Activated CD8-positive, alpha-beta T cell treated with anti-CD3 and anti-CD28 coated beads, Interleukin-2, amount 10 ng/mL, durations not matched to agents 7 days and 5 days (primary cell): ENCODE measurements at regions of chr1 and their contacts with region 1.

Region 1: DNA sequence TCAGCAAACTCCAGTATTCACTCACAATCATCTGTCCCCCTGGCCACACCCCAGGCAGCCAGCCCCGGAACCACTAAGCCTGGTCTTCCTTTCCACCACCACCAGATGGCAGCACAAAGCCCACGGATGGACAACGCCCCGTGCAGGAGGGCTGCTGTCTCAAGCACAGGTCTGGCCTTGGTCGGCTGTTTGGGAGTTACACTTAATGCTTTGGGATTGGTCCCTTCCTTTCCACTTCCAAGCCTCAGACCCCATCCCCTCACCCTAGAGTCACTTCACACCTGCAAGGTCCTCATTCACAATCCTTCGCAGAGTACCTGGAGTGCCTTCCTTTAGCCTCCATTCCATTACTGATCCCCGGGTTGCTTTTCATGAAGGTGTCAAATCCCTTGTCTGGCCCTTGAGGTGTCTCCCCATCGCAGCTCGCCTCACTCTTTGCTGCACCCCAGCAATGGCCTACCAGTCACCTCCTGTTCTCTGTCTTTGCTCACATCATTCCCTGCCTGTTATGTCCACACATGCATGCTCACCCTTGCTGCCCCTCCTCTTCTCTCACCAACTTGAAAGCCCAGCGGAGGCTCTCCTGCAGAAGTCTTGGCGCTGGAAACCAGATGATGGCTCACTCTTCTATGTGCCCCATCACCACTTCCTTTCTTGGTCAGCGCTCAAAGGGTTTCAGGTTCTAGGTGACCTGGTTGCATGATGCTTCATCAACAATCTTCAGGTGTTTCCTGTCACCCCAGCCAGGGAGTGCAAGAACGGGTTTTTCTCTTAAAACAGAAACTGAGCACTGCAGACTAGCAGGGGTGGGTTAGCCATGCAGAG is 24.9 kb upstream of the KCNA2 start:
- DNase-seq: peak; percentile 94
- ATAC-seq: peak; percentile 84
- H3K4me3 Mint-ChIP-seq: no peak overlapping the region
- H3K27ac Mint-ChIP-seq: no peak overlapping the region
- H3K4me1 Mint-ChIP-seq: peaks cover 32% of the 10 kb centered on the region
- H3K27me3 Mint-ChIP-seq: no peaks in the 10 kb centered on the region

Region 2: DNA sequence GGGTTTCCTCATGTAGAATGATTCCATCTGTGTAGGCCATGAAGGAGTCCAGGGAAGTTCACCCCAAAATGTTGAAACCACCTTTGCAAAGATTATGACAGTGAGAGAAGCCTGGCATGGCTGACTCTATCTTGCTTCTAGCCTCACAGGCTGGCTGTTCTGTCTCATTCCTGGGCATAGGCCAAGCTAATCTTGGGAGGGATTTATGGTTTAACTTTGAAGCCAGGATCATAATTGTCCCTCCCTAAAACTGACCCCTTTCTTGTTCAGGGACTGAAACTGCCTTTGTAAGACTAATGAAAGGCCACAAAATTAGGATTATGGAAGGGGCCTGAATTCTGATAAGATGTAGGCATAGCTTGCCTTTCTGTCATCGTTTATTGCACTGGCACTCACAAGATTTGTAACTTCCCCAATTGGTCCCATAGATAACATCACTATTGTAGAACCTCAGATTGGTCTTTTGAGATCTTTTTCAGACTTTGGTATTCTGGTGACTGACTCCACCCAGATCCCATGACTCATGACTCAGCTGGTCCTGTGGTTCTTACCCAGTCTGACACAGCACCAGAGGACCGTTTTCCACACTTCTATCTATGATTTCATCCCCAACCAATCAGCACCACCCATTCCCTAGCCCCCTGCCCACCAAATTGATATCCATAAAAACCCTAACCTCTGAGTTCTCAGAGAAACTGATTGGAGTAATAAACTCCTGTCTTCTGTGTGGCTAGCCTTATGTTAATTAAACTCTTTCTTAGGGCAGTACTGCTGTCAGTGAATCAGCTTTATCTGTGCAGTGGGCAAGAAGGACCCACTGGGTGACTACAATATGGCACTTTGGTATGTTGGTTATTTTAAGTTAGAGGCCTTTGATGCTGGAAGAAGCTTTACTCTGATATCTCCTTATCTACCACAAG is 209.9 kb before region 1 on chr1:
- CTCF ChIA-PET with region 1: no interaction called
- POLR2A ChIA-PET with region 1: no interaction called
- DNase-seq: no peak
- ATAC-seq: peak; percentile 47
- H3K4me3 Mint-ChIP-seq: no peak overlapping the region
- H3K27ac Mint-ChIP-seq: no peak overlapping the region
- H3K4me1 Mint-ChIP-seq: peaks cover 11% of the 10 kb centered on the region
- H3K27me3 Mint-ChIP-seq: peaks cover 9% of the 10 kb centered on the region

Region 3: GRCh38 chr1:110668549-110668948 is 37.5 kb after region 1 on chr1:
- CTCF ChIA-PET with region 1: interaction called, 44 read pairs
- POLR2A ChIA-PET with region 1: interaction called, 118 read pairs
- DNase-seq: no peak
- ATAC-seq: peak; percentile 21
- H3K4me3 Mint-ChIP-seq: peak overlapping the region; percentile 66
- H3K27ac Mint-ChIP-seq: peak overlapping the region; percentile 78
- H3K4me1 Mint-ChIP-seq: peaks cover 35% of the 10 kb centered on the region
- H3K27me3 Mint-ChIP-seq: no peaks in the 10 kb centered on the region

Region 4: DNA sequence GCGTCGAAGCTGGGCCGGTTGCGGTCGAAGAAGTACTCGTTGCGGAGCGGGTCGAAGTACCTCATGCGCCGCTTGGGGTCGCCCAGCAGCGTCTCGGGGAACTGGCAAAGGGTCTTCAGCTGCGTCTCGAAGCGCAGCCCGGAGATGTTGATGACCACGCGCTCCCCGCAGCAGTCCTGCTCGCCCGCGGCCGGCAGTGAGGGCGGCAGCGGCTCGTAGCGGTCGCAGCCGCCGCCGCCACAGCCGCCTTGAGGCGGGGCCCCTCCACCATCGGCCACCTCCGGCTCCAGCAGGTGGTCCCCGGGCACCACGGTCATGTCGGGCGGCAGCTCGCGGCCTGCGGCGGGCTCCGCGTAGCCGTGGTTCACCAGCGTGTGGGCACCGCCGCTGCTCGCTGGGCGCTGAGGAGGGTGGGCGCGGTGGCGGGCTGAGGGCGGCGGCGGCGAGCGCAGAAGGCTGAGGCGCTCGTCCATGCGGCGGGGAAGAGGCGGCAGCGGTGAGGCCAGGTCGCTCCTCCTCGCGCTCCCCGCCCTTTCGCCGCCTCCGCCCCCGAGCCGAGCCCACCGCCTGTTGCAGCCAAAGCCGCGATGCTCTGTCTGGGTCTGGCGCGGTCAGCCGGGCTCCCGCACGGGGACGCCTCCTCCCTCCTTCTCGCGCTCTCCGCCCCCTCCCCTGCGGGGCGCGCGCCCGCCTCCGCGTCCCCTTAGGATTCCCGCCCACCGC is 43.4 kb after region 1 on chr1 and contains the start of gene KCNA3:
- CTCF ChIA-PET with region 1: interaction called, 44 read pairs
- POLR2A ChIA-PET with region 1: interaction called, 118 read pairs
- DNase-seq: peak; percentile 77
- ATAC-seq: peak; percentile 43
- H3K4me3 Mint-ChIP-seq: peak within 1 kb of the TSS; percentile 95
- H3K27ac Mint-ChIP-seq: peak within 1 kb of the TSS; percentile 91
- H3K4me1 Mint-ChIP-seq: peaks cover 33% of the 10 kb centered on the region
- H3K27me3 Mint-ChIP-seq: no peaks in the 10 kb centered on the region
- total RNA-seq, gene KCNA3: 49.0 to 49.3 TPM